ENCODE measurements at regions of chr11 and their contacts with region 1.

Region 1: DNA sequence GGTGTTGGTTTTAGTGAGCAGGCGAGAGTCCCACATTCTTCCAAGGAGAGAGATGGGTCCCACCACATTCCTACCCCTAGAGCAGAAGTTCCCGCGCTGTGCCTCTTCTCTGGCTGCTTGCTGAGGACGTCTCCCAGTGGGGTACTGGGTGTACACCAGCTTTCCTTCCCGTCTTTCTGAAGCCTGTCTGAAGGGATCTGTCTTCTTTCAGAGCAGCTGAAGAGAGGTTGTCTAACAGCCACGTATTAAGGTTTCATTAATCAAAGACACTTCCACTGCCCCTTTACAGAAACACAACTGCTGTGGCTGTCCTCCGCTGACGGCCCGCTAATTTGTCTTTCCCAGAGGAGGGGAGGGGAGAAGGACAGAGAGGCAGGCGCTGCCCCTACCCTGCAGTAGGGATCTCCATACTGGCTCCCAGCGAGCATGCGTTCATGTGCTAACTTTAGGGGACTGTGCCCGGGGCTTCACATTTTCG is 56.0 kb downstream of the ZBTB16 start:
- DNase-seq: peak; percentile 90 to 91
- H3K4me3 ChIP-seq: no peak overlapping the region
- H3K4me3 Mint-ChIP-seq: peak overlapping the region; percentile 12
- H3K27ac Mint-ChIP-seq: peak overlapping the region; percentile 83
- H3K4me1 ChIP-seq: peaks cover 63% of the 10 kb centered on the region
- H3K4me1 Mint-ChIP-seq: peaks cover 47% of the 10 kb centered on the region
- H3K27me3 ChIP-seq: no peaks in the 10 kb centered on the region
- H3K27me3 Mint-ChIP-seq: no peaks in the 10 kb centered on the region
- CTCF ChIP-seq: peak in 1 of 2 experiments; percentile 73

Region 2: GRCh38 chr11:114059278-114059983 is 56.1 kb before region 1 on chr11 and contains the start of gene ZBTB16:
- CTCF ChIA-PET with region 1: interaction called, 9 read pairs
- POLR2A ChIA-PET with region 1: interaction called, 3 read pairs
- intact Hi-C with region 1: loop called (anchors 1 kb)
- DNase-seq: peak; percentile 83 to 88
- H3K4me3 ChIP-seq: peak within 1 kb of the TSS; percentile 78
- H3K4me3 Mint-ChIP-seq: peak within 1 kb of the TSS; percentile 86
- H3K27ac Mint-ChIP-seq: peak within 1 kb of the TSS; percentile 74
- H3K4me1 ChIP-seq: peaks cover 10% of the 10 kb centered on the region; the same call in 1 of the 2 replicates
- H3K4me1 Mint-ChIP-seq: peaks cover 16% of the 10 kb centered on the region
- H3K27me3 ChIP-seq: no peaks in the 10 kb centered on the region
- H3K27me3 Mint-ChIP-seq: peaks cover 11% of the 10 kb centered on the region
- CTCF ChIP-seq: peak in 1 of 2 experiments; percentile 78
- total RNA-seq, gene ZBTB16: 10.6 and 12.7 TPM in 2 replicates

Region 3: GRCh38 chr11:114099392-114100178 is 15.9 kb before region 1 on chr11:
- CTCF ChIA-PET with region 1: interaction called, 7 read pairs
- POLR2A ChIA-PET with region 1: no interaction called
- intact Hi-C with region 1: loop called (anchors 1 kb)
- DNase-seq: peak in 1 of 2 experiments; percentile 38
- H3K4me3 ChIP-seq: no peak overlapping the region
- H3K4me3 Mint-ChIP-seq: peak overlapping the region; percentile 2
- H3K27ac Mint-ChIP-seq: peak overlapping the region; percentile 68
- H3K4me1 ChIP-seq: peaks cover 37% of the 10 kb centered on the region
- H3K4me1 Mint-ChIP-seq: peaks cover 59% of the 10 kb centered on the region
- H3K27me3 ChIP-seq: no peaks in the 10 kb centered on the region
- H3K27me3 Mint-ChIP-seq: no peaks in the 10 kb centered on the region
- CTCF ChIP-seq: no peak

Region 4: GRCh38 chr11:114135737-114136151 is 20.3 kb after region 1 on chr11:
- CTCF ChIA-PET with region 1: interaction called, 5 read pairs
- POLR2A ChIA-PET with region 1: interaction called, 5 read pairs
- intact Hi-C with region 1: loop called (anchors 1 kb)
- DNase-seq: no peak
- H3K4me3 ChIP-seq: no peak overlapping the region
- H3K4me3 Mint-ChIP-seq: no peak overlapping the region
- H3K27ac Mint-ChIP-seq: no peak overlapping the region
- H3K4me1 ChIP-seq: peaks cover 12% of the 10 kb centered on the region; the same call in 1 of the 2 replicates
- H3K4me1 Mint-ChIP-seq: peaks cover 18% of the 10 kb centered on the region
- H3K27me3 ChIP-seq: no peaks in the 10 kb centered on the region
- H3K27me3 Mint-ChIP-seq: no peaks in the 10 kb centered on the region
- CTCF ChIP-seq: no peak

Region 5: DNA sequence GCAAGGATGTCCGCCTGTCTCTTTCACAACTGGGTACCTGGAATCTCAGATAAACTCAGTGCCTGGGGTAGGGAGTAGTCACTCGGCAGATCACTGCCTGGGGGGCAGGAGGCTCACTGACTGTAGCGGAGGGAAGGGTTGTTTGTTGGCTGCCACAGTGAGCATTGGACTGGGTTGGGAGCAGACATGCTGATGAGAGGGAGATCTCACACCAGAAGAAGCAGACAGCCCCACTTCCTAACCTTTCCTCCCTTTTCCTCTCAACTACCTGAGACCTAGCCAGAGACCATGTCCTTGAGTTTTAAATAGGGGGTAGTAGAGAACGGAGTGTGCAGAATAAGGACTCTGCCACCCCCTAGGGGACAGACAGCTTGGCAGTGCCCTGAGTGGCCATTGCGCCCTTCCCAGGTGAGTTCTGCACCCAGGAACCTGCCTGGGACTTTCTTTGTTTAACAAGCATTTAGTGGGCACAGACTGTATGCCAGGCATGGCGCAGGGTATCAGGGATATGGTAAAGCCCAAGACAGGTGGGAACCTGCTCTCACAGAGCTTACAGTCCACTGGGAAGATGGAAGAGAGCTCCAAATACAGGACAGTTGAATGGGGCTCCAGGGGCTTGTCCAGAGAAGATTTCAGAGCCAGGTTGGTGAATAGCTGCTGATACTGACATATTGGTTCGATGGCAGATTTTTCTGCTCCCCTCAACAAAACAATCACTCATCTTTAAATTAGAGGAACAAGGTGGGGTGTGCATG is 65.0 kb after region 1 on chr11:
- CTCF ChIA-PET with region 1: interaction called, 6 read pairs
- POLR2A ChIA-PET with region 1: interaction called, 3 read pairs
- intact Hi-C with region 1: loop called (anchors 1 kb)
- DNase-seq: peak; percentile 64 to 73
- H3K4me3 ChIP-seq: no peak overlapping the region
- H3K4me3 Mint-ChIP-seq: no peak overlapping the region
- H3K27ac Mint-ChIP-seq: no peak overlapping the region
- H3K4me1 ChIP-seq: peaks cover 22% of the 10 kb centered on the region
- H3K4me1 Mint-ChIP-seq: peaks cover 25% of the 10 kb centered on the region
- H3K27me3 ChIP-seq: no peaks in the 10 kb centered on the region
- H3K27me3 Mint-ChIP-seq: no peaks in the 10 kb centered on the region
- CTCF ChIP-seq: peak; percentile 80 to 91

Measured in Caco-2 (cell line).